ENCODE measurements at regions of chr5 and their contacts with region 1.

Region 1: DNA sequence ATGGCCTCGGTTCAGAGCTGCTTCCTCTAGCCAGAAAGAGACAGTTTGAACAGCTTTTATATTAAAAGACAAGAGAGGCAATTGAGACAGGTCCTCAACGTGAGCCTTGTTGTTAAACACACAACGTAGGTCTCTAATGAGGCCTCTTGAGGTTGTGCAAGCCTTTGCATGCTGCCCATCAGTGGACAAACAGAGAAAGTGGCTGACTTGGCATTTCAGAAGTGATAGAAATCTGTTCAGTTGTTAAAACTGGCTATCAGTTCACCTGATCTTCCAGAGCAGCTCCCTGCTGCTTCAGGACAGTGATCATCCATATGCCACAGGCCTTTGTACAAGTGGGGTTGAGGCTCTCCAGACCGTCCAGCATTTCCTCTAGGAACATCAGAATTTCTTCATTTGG is 58.8 kb downstream of the MROH2B start:
- DNase-seq: no peak
- H3K4me3 Mint-ChIP-seq: no peak overlapping the region
- H3K27ac Mint-ChIP-seq: no peak overlapping the region
- H3K4me1 Mint-ChIP-seq: no peaks in the 10 kb centered on the region
- H3K27me3 Mint-ChIP-seq: peaks cover 13% of the 10 kb centered on the region
- CTCF ChIP-seq: no peak

Region 2: DNA sequence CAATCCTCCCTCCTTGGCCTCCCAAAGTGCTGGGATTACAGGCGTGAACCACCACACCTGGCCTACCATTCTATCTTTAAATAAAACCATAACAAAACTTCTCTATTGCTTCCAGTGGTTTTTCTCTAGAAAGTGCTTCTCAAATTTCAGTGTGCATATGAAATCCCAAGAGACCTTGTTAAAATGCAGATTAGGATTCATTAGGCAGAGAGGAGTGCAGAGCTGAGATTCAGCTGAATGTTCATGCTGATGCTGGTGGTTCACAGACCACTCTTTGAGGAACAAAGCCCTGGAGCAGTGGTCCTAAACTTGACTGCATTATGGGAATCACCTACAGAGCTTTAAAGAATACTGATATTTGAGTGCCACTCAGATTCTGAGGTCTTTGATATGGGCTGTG is 142.9 kb before region 1 on chr5:
- CTCF ChIA-PET with region 1: no interaction called
- intact Hi-C with region 1: no loop called
- DNase-seq: no peak
- H3K4me3 Mint-ChIP-seq: no peak overlapping the region
- H3K27ac Mint-ChIP-seq: no peak overlapping the region
- H3K4me1 Mint-ChIP-seq: peaks cover 7% of the 10 kb centered on the region
- H3K27me3 Mint-ChIP-seq: no peaks in the 10 kb centered on the region
- CTCF ChIP-seq: no peak

Region 3: GRCh38 chr5:40983781-40984180 is 28.5 kb before region 1 on chr5:
- CTCF ChIA-PET with region 1: no interaction called
- intact Hi-C with region 1: loop called (anchors 2 kb)
- DNase-seq: no peak
- H3K4me3 Mint-ChIP-seq: no peak overlapping the region
- H3K27ac Mint-ChIP-seq: no peak overlapping the region
- H3K4me1 Mint-ChIP-seq: no peaks in the 10 kb centered on the region
- H3K27me3 Mint-ChIP-seq: peaks cover 16% of the 10 kb centered on the region
- CTCF ChIP-seq: no peak

Measured in Calu3 (cell line).